CD8-positive, alpha-beta T cell (primary cell): ENCODE measurements at regions of chr1 and their contacts with region 1.

Region 1: DNA sequence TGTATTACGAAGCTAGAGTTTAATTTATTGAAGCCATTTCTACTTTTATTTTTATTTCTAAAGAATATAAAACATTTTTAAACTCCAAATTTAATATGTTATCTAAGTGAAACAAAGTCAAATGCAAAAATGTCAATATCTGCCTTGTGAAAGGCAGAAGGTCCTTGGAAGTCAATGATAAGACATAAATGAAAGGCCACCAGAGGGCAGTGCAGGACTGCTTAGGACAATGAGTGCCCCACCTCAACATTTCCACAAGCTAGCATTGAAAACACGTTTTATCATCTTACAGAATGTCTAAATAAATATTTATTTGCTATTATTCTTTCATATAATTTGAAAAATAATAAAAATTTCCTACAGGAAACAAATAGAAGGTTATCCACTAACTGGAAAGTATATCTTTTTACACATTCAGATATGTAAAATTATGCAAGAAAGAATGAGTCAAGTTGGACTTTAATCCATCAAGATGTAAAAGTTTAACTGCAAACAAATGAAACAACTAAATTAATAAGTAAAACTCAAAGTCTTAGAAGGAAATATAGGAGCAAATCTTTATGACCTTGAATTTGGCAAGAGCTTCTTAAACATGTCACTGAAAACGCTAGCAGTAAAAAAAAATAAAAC is 140.1 kb upstream of the FMN2 start:
- DNase-seq: peak in 7 of 9 experiments; percentile 13 to 54 (median 39)
- ATAC-seq: no peak
- H3K4me3 ChIP-seq: no peak overlapping the region
- H3K4me3 Mint-ChIP-seq: no peak overlapping the region
- H3K27ac ChIP-seq: no peak overlapping the region
- H3K27ac Mint-ChIP-seq: no peak overlapping the region
- H3K4me1 ChIP-seq: no peaks in the 10 kb centered on the region
- H3K4me1 Mint-ChIP-seq: no peaks in the 10 kb centered on the region
- H3K27me3 ChIP-seq: no peaks in the 10 kb centered on the region
- H3K27me3 Mint-ChIP-seq: no peaks in the 10 kb centered on the region
- CTCF ChIP-seq: peak; percentile 64

Region 2: DNA sequence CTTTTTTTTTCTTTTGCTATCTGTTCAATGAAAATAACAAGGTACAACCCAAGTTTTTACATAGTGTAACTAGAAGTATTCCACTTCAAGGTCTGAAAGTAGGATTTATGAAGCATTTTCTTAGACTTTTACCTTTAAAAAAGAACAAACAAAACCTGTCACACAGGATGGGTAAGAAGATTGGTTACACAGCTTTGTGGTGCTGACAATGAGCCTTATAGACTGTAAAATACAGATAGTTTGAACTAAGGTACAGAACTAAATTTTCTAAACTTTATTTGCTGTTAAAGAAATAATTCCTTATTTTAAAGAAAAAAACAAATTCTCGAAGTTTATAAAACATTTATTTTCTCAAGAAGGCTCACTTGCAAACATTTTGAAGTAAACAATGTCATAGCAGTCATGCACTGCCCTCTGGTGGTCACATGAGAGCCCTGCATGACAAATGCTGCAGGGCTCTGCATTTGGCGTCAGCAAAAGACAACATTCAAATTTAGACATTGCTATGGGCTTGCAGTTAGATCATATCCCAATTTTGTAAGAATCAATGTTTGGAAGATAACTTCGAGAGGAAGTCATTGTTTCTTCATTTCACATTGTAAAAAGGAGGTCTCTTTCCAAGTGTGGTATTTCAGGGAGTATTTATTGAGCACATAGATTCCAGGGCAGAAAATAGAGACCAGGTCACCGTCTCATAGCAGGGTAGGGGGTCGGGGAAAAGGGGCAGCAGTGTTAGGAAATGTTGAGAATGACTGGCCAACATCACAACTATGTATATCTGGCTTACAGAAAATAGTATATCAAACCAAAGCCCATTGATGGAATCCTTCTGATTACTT is 24.7 kb after region 1 on chr1:
- CTCF ChIA-PET with region 1: interaction called, 5 read pairs
- POLR2A ChIA-PET with region 1: no interaction called
- intact Hi-C with region 1: loop called (anchors 1 kb)
- DNase-seq: peak in 4 of 9 experiments; percentile 44 to 55 (median 44)
- ATAC-seq: no peak
- H3K4me3 ChIP-seq: no peak overlapping the region
- H3K4me3 Mint-ChIP-seq: no peak overlapping the region
- H3K27ac ChIP-seq: no peak overlapping the region
- H3K27ac Mint-ChIP-seq: no peak overlapping the region
- H3K4me1 ChIP-seq: no peaks in the 10 kb centered on the region
- H3K4me1 Mint-ChIP-seq: no peaks in the 10 kb centered on the region
- H3K27me3 ChIP-seq: no peaks in the 10 kb centered on the region
- H3K27me3 Mint-ChIP-seq: no peaks in the 10 kb centered on the region
- CTCF ChIP-seq: peak; percentile 98